ENCODE measurements at regions of chr12 and their contacts with region 1.

Region 1: GRCh38 chr12:32854097-32854496 is 42.5 kb downstream of the PKP2 start:
- DNase-seq: no peak
- ATAC-seq: peak in 7 of 8 donors; percentile 73 to 93 (median 85)
- H3K4me3 ChIP-seq: no peak overlapping the region
- H3K27ac ChIP-seq: peak overlapping the region; percentile 21 to 78 (median 62)
- H3K4me1 ChIP-seq: peaks cover 0 to 67% (median 14%) of the 10 kb centered on the region in 9 donors
- H3K27me3 ChIP-seq: no peaks in the 10 kb centered on the region
- CTCF ChIP-seq: no peak

Region 2: GRCh38 chr12:32737715-32738114 is 116.4 kb before region 1 on chr12:
- intact Hi-C with region 1: no loop called
- DNase-seq: no peak
- ATAC-seq: no peak
- H3K4me3 ChIP-seq: no peak overlapping the region
- H3K27ac ChIP-seq: no peak overlapping the region
- H3K4me1 ChIP-seq: peaks cover 0 to 23% (median 4%) of the 10 kb centered on the region in 9 donors
- H3K27me3 ChIP-seq: no peaks in the 10 kb centered on the region
- CTCF ChIP-seq: no peak

Region 3: GRCh38 chr12:32801269-32801980 is 52.7 kb before region 1 on chr12:
- intact Hi-C with region 1: loop called in 1 of 10 experiments (anchors 5 kb)
- DNase-seq: no peak
- ATAC-seq: peak in 2 of 8 donors; percentile 53 to 62
- H3K4me3 ChIP-seq: no peak overlapping the region
- H3K27ac ChIP-seq: peak overlapping the region in 5 of 10 donors; percentile 5 to 68 (median 40)
- H3K4me1 ChIP-seq: peaks cover 0 to 4% (median 0%) of the 10 kb centered on the region in 9 donors
- H3K27me3 ChIP-seq: no peaks in the 10 kb centered on the region
- CTCF ChIP-seq: no peak